ENCODE measurements at regions of chr16 and their contacts with region 1.

Region 1: DNA sequence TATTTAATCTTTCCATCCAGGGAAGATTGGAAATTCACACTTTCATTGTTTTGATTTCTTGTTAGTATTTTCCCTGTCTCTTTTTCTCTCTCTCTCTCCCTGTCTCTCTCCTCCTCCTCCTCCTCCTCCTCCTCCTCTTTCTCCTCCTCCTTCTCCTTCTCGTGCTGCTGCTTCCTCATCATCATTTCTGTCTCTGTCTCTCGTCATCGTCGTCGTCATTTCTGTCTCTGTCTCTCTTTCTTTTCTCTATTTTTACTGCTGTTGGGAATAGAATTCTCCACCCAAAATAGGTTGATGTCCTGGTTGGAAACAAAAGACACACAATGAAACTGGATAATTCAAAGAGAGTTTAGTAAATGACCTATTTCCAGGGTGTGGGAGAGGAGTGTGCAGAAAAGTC is 304.1 kb upstream of the EEF2KMT start:
- DNase-seq: no peak
- H3K4me3 ChIP-seq: no peak overlapping the region
- H3K27ac ChIP-seq: no peak overlapping the region
- H3K4me1 ChIP-seq: no peaks in the 10 kb centered on the region
- H3K27me3 ChIP-seq: no peaks in the 10 kb centered on the region
- CTCF ChIP-seq: no peak
- EP300 ChIP-seq: no peak
- POLR2A ChIP-seq: no peak

Region 2: DNA sequence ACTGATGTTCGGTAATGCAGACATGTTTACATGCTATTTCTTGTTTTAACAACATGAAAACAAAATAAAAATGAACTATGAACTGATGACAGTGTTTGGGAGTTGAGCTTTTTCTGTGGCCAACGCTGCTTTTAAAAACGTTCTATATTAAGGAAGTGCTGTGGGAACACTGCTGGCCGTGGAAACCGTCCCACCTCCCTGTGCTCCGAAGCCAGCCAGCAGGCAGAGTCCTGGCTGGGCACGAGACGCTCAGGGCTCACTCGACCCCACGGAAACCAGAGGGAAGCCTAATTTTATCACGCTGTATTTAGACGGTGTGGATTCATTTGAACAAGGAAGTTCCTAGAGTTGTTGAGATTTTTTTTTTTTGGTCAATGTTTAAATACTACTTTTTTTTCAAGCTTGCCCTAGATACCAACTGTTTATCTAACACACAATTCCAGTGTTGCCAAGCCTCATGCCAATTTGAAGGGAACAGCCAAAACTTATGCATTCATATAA is 1311.3 kb before region 1 on chr16:
- in situ Hi-C with region 1: no loop called
- intact Hi-C with region 1: no loop called
- DNase-seq: peak; percentile 47
- H3K4me3 ChIP-seq: peak overlapping the region in 1 of 4 donors; percentile 16
- H3K27ac ChIP-seq: peak overlapping the region; percentile 51 to 76 (median 72)
- H3K4me1 ChIP-seq: peaks cover 5 to 56% (median 23%) of the 10 kb centered on the region in 4 donors
- H3K27me3 ChIP-seq: no peaks in the 10 kb centered on the region
- CTCF ChIP-seq: no peak
- EP300 ChIP-seq: no peak
- POLR2A ChIP-seq: no peak

Region 3: GRCh38 chr16:5446623-5447240 is 45.1 kb after region 1 on chr16:
- in situ Hi-C with region 1: no loop called
- intact Hi-C with region 1: loop called (anchors 2 kb)
- DNase-seq: no peak
- H3K4me3 ChIP-seq: no peak overlapping the region
- H3K27ac ChIP-seq: no peak overlapping the region
- H3K4me1 ChIP-seq: no peaks in the 10 kb centered on the region
- H3K27me3 ChIP-seq: no peaks in the 10 kb centered on the region
- CTCF ChIP-seq: no peak
- EP300 ChIP-seq: no peak
- POLR2A ChIP-seq: no peak

Region 4: GRCh38 chr16:5502467-5502869 is 100.8 kb after region 1 on chr16:
- in situ Hi-C with region 1: no loop called
- intact Hi-C with region 1: no loop called
- DNase-seq: peak; percentile 10
- H3K4me3 ChIP-seq: no peak overlapping the region
- H3K27ac ChIP-seq: no peak overlapping the region
- H3K4me1 ChIP-seq: no peaks in the 10 kb centered on the region
- H3K27me3 ChIP-seq: no peaks in the 10 kb centered on the region
- CTCF ChIP-seq: peak in 4 of 5 experiments; percentile 28 to 50 (median 40)
- EP300 ChIP-seq: no peak
- POLR2A ChIP-seq: no peak

Measured in transverse colon (tissue), 4 donors.